AG04449 (cell line): ENCODE measurements at regions of chr2 and their contacts with region 1.

Region 1: DNA sequence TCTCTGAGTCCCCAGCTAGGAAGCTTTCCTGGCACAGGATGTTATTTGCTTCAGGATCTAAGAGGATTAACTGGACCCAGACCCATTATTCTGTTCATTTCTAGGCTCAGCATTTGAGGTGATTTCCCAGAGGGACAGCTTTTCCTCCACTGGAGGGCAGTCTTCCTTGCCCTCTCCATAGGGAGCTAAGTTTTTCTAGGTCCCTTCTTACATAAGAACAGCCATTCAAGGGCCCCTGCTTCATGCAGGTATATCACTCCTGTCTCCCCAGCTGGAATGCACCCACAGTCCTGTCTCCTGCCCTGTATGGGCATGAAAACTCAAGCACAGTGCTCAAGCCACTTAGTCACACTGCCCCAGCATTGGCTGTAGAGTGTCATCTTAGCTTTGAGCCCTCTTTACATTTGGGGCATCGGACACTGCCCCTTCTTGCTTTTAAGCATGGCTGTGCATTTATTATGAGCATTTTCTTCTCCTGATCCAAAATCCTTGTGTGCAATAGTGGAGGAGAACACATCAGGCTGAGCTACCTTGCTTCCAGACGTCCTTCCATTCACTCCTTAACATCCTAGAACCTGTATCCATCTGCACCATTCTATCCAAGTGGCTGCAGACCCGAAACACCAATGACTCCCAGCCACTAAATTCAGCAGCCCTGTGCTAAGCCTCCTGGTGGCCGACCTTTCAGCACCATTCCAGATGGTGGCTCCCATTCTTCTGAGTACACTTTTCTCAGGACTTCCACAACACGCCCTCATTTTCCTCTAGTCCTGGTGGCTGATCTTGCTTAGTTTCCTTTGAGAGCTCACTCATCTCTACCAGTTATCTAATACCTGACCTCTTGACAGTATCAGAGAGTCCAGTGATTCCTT is 80.0 kb downstream of the COPS8 start:
- DNase-seq: no peak
- H3K4me3 ChIP-seq: no peak overlapping the region
- CTCF ChIP-seq: peak; percentile 53

Region 2: DNA sequence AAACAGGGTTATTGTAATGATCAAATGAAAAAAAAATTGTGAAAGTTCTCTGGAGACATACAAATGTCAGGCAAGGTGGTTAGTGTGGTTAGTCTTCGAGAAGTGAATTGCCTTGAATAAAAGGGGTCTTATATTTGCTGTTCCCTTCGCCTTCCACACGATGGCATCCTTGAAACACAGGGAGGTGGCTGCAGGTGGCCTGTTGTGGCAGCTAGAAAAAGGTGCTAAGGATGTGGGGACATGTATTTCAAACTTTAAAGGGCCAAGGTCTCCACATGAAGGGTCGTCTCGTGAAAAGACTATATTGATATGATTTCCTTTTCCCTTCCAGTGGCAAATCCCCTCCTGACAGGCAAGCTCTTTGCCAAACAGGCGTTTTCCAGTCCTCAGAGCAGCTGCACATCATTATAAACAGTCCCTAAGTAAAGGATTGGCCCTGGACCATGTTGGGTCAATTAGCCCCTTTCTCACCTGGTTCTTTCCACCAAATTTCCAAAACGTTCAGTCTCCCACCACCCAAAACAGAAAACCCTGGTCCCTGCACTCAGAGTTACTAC is 11.5 kb before region 1 on chr2:
- CTCF ChIA-PET with region 1: interaction called, 34 read pairs
- POLR2A ChIA-PET with region 1: no interaction called
- DNase-seq: no peak
- H3K4me3 ChIP-seq: no peak overlapping the region
- CTCF ChIP-seq: peak; percentile 71

Region 3: GRCh38 chr2:237256887-237257286 is 91.2 kb after region 1 on chr2:
- CTCF ChIA-PET with region 1: interaction called, 16 read pairs
- POLR2A ChIA-PET with region 1: no interaction called
- DNase-seq: no peak
- H3K4me3 ChIP-seq: no peak overlapping the region
- CTCF ChIP-seq: no peak

Region 4: DNA sequence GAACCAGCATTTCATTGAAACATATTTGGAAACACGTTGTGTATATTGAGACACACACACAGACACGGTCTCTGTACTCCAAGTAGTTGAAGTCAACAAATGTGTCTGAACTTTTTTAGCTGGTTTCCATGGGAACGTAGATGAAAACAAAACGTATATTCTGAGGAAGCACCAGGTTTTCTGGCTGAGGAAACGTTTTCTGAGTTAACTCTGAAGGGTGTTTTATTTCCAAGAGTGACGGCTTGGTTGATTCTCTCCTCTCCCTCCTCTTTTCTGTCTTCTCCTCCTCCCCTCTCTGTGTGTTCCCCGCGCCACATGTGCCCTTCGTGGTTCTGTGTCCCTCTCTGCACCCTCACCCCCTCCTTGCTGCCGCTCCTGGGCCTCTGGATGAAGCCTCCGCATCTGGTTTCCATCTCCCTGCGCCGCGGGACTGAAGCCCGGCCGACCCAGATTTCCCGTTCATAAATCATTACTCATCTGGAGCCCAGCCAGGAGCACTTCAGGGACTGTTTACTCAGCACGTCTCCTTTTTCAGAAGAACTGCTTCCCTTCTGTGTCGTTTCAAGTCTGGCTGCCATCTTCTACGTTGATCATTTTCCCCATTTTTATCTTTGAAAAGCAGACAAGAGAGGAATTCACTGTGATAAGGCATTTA is 125.6 kb after region 1 on chr2:
- CTCF ChIA-PET with region 1: interaction called, 28 read pairs
- POLR2A ChIA-PET with region 1: no interaction called
- DNase-seq: peak; percentile 86
- H3K4me3 ChIP-seq: no peak overlapping the region; the same call in 1 of the 2 replicates
- CTCF ChIP-seq: no peak

Region 5: DNA sequence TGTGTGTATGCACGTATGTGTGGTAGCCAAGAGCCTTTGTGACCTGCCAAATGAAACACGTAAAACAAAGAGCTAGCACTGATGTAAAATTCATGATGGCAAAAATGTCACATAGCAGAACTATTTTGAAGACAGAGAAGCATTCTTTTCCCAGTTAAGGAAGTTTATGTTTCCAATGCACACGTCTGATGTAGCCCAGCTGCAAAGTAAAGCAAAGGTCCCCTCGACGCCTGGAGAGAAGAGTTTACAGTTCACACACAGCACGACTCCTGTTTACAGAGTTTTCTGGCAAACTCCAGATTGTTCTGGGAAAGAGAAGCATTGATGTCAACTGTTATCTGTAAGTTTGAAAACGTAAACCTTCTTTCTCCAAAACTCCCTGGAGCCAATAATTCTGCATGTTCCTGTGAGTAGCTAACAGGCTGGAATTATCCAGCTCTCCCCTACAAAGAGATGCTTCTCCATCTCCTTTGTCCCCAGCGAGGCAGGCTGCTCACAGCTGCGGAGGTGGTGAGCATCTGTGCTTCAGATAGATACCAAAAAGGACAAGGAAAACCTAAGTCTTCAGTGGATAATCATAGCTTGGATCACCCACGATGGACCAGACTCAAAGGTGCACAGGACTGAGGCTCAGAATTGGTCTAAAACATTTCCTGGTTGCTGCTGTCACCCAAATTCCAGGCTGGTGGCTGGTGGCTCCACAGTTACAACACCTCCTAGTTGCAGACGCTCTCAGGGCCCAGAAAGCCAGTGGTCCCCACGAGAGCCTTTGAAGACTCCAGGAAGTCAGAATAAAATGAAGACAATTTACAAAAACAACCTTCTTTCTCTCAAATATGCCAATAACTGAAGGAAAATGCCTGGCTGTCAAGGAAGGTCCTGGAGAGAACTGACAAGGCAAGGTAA is 160.9 kb after region 1 on chr2:
- CTCF ChIA-PET with region 1: interaction called, 16 read pairs
- POLR2A ChIA-PET with region 1: no interaction called
- DNase-seq: no peak
- H3K4me3 ChIP-seq: no peak overlapping the region
- CTCF ChIP-seq: no peak

Region 6: DNA sequence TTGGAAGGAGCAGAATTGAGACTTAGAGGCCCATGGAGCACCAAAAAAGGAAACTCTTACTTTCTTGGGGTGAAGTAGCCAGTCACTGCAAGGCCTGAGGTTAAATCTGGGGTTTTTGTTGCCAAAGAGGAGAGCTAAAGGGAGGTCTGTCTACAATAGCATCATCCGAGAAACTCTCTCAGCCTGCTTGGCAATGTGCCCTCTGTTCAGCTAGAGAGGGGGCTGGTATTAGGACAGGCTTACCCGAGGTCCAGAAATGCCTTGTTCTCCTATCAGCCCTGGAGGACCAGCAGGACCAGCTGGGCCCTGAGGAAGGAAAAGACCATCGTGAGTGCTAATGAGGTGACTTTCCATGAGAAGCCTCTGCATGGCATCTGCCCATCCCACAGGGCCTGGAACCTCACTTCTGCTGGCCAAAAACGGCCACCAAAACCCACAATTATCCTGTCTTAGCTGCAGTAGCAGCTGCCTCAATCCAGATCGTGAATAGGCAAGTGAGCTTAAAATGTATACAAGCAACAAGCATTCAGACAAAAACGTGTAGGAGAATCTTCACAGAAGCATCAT is 186.7 kb after region 1 on chr2:
- CTCF ChIA-PET with region 1: interaction called, 12 read pairs
- POLR2A ChIA-PET with region 1: no interaction called
- DNase-seq: no peak
- H3K4me3 ChIP-seq: no peak overlapping the region
- CTCF ChIP-seq: no peak

Region 7: GRCh38 chr2:237469849-237470248 is 304.2 kb after region 1 on chr2:
- CTCF ChIA-PET with region 1: no interaction called
- POLR2A ChIA-PET with region 1: no interaction called
- DNase-seq: no peak
- H3K4me3 ChIP-seq: no peak overlapping the region
- CTCF ChIP-seq: no peak